Activated T-helper 1 cell treated with anti-CD3 and anti-CD28 coated beads, Interleukin-12 subunit alpha, Interleukin-12 subunit beta, Interleukin-2, Interleukin-4 antibody, amounts not matched to agents 30 ng/mL and 10 ng/mL and 1 ng/mL, durations not matched to agents 14 hours and 24 hours and 36 hours (primary cell): ENCODE measurements at regions of chr6 and their contacts with region 1.

Region 1: GRCh38 chr6:151475653-151476523 is 17.9 kb upstream of the CCDC170 start:
- DNase-seq: no peak
- H3K4me3 Mint-ChIP-seq: no peak overlapping the region
- H3K27ac Mint-ChIP-seq: no peak overlapping the region
- H3K4me1 Mint-ChIP-seq: peaks cover 7% of the 10 kb centered on the region
- H3K27me3 Mint-ChIP-seq: no peaks in the 10 kb centered on the region

Region 2: GRCh38 chr6:151409260-151409659 is 66.6 kb before region 1 on chr6:
- intact Hi-C with region 1: loop called (anchors 1 kb)
- DNase-seq: no peak
- H3K4me3 Mint-ChIP-seq: no peak overlapping the region
- H3K27ac Mint-ChIP-seq: peak overlapping the region; percentile 56
- H3K4me1 Mint-ChIP-seq: peaks cover 13% of the 10 kb centered on the region
- H3K27me3 Mint-ChIP-seq: no peaks in the 10 kb centered on the region

Region 3: DNA sequence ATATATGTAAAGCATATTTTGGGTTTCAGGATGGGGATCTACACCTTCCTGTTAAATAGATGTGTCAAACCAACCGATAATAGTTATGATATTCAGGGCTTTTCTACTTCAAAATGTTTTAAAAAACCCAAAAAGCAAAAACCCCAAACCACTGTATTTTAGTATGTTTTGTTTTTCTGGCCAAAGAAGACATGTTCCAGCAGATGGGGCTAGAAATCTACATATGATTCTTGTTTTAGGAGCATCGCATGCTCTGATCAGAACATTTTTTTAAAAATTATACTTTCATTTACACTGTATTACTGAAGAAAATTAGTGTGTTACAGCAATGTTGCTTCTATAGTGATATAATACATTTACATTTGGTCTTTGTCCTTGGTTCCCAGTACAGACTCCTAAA is 35.0 kb before region 1 on chr6:
- intact Hi-C with region 1: loop called (anchors 1 kb)
- DNase-seq: no peak
- H3K4me3 Mint-ChIP-seq: no peak overlapping the region
- H3K27ac Mint-ChIP-seq: no peak overlapping the region
- H3K4me1 Mint-ChIP-seq: peaks cover 20% of the 10 kb centered on the region
- H3K27me3 Mint-ChIP-seq: no peaks in the 10 kb centered on the region